Tibial artery (tissue), 4 donors: ENCODE measurements at regions of chr4 and their contacts with region 1.

Region 1: DNA sequence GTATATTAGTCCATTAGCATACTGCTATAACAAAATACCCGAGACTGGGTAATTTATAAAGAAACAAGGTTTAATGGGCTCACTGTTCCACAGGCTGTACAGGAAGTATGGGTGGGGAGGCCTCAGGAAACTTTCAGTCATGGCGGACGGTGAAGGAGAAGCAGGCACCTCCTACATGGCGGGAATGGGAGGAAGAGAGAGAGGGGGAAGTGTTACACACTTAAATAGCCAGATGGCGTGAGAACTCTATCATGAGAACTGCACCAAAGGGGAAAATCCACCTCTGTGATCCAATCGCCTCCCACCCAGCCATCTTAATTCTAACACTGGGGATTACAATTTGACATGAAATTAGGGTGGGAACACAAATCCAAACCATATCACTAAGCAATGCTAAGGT is 98.9 kb upstream of the SH3RF1 start:
- DNase-seq: no peak
- H3K4me3 ChIP-seq: no peak overlapping the region
- H3K27ac ChIP-seq: no peak overlapping the region
- H3K4me1 ChIP-seq: no peaks in the 10 kb centered on the region
- H3K27me3 ChIP-seq: no peaks in the 10 kb centered on the region
- CTCF ChIP-seq: no peak

Region 2: GRCh38 chr4:168109527-168109926 is 1260.1 kb before region 1 on chr4:
- intact Hi-C with region 1: loop called (anchors 5 kb)
- DNase-seq: no peak
- H3K4me3 ChIP-seq: no peak overlapping the region
- H3K27ac ChIP-seq: no peak overlapping the region
- H3K4me1 ChIP-seq: no peaks in the 10 kb centered on the region
- H3K27me3 ChIP-seq: no peaks in the 10 kb centered on the region
- CTCF ChIP-seq: no peak